Right ventricle myocardium superior (tissue), 1 donor: ENCODE measurements at regions of chr5 and their contacts with region 1.

Region 1: GRCh38 chr5:131810510-131811249 is 13.9 kb upstream of the FNIP1 start:
- DNase-seq: no peak
- ATAC-seq: peak; percentile 94

Region 2: DNA sequence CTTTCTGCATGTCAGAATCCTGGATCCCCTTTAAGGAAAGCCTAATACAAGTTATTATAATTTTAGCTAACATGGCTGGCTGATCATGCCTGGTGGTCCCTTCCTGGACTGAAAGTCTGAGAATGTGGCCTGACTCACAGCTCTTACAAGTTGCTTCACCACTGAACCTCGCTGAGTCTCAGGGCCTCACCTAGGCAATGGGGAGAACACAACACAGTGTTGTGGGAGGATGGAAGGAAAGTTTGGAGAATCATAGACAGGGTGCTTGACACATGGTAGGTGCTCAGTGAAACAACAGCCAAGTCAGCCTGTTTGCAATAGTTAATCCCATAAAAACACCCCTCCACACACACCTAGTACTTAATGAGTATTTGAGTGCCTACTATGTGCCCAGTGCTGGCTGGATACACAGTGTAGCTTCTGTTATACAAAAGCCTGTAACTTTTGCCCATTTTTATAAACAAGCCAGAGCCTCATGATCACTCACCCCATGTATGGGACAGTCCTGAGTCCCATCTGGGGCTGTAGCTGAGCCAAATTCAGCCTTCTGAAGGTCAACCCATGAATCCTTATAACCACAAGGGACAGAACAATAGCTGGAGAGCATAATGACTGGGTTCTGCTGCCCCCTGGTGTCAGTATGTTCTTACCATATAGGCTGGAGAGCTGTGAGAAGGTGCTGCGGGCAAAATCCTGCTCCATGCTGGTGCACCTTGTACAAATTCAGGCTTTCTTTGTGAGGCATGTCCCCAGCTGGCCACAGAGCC is 196.9 kb after region 1 on chr5:
- intact Hi-C with region 1: loop called (anchors 5 kb)
- DNase-seq: peak; percentile 68
- ATAC-seq: peak; percentile 81